Naive thymus-derived CD4-positive, alpha-beta T cell (primary cell): ENCODE measurements at regions of chr12 and their contacts with region 1.

Region 1: DNA sequence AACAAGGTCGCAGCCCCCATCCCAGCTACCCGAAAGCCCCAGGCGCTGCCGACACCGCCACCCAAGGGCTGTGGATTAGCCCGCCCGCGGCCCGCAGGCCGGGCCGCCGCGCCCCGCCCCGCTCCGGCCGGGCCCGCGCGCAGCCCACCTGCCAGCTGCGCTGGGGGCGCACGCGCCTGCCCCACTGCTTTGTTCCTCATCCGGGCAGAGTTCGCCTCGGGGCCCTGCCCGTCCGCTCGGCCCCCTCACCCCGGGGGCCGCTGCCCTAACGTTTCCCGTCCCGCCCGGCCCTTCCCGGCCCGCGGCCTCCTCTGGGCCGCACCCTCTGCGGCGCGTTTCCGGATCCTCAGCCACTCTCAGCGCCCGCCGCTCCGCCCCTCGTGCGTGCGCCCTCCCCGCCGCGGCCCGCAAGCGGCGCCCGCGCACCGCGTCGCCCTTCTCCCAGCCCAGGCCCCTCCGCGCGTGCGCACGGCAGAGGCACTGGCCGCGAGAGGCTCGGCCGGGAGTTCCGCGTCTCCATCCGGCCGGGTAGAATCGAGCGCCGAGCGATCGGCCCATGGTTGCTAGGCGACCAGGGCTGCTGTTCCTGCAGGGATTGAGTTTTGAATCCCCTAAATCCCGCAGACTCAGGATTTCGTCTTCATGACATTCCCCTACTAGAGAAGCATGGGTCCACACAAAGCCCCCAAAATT is at the start of gene PRDM4:
- DNase-seq: peak; percentile 85 to 96 (median 93)
- ATAC-seq: peak; percentile 99
- H3K4me3 ChIP-seq: peak within 1 kb of the TSS; percentile 83
- H3K4me3 Mint-ChIP-seq: peak within 1 kb of the TSS; percentile 85 to 94 (median 91)
- H3K27ac ChIP-seq: peak within 1 kb of the TSS; percentile 78
- H3K27ac Mint-ChIP-seq: peak within 1 kb of the TSS; percentile 85 to 96 (median 91)
- H3K4me1 ChIP-seq: peaks cover 21% of the 10 kb centered on the region in 2 donors
- H3K4me1 Mint-ChIP-seq: peaks cover 19 to 52% (median 35%) of the 10 kb centered on the region in 7 donors
- H3K27me3 ChIP-seq: no peaks in the 10 kb centered on the region
- H3K27me3 Mint-ChIP-seq: peaks cover 0 to 5% (median 0%) of the 10 kb centered on the region in 5 donors
- total RNA-seq, gene PRDM4: 32.4 to 41.3 (median 36.4) TPM

Region 2: GRCh38 chr12:106774005-106774807 is 986.7 kb before region 1 on chr12 and contains the start of gene RIC8B:
- CTCF ChIA-PET with region 1: no interaction called
- POLR2A ChIA-PET with region 1: no interaction called
- intact Hi-C with region 1: loop called (anchors 1 to 10 kb)
- DNase-seq: peak; percentile 63 to 84 (median 70)
- ATAC-seq: peak; percentile 91
- H3K4me3 ChIP-seq: peak within 1 kb of the TSS; percentile 84
- H3K4me3 Mint-ChIP-seq: peak within 1 kb of the TSS; percentile 92 to 100 (median 97)
- H3K27ac ChIP-seq: peak within 1 kb of the TSS; percentile 88
- H3K27ac Mint-ChIP-seq: peak within 1 kb of the TSS; percentile 94 to 99 (median 97)
- H3K4me1 ChIP-seq: peaks cover 0 to 19% of the 10 kb centered on the region in 2 donors
- H3K4me1 Mint-ChIP-seq: peaks cover 22 to 49% (median 39%) of the 10 kb centered on the region in 7 donors
- H3K27me3 ChIP-seq: no peaks in the 10 kb centered on the region
- H3K27me3 Mint-ChIP-seq: peaks cover 0 to 7% (median 0%) of the 10 kb centered on the region in 5 donors
- total RNA-seq, gene RIC8B: 9.8 to 21.1 (median 15.6) TPM

Region 3: GRCh38 chr12:107570721-107571120 is 190.2 kb before region 1 on chr12:
- CTCF ChIA-PET with region 1: no interaction called
- POLR2A ChIA-PET with region 1: no interaction called
- intact Hi-C with region 1: no loop called
- DNase-seq: no peak
- ATAC-seq: no peak
- H3K4me3 ChIP-seq: no peak overlapping the region
- H3K4me3 Mint-ChIP-seq: no peak overlapping the region
- H3K27ac ChIP-seq: no peak overlapping the region
- H3K27ac Mint-ChIP-seq: no peak overlapping the region
- H3K4me1 ChIP-seq: no peaks in the 10 kb centered on the region
- H3K4me1 Mint-ChIP-seq: peaks cover 8 to 18% (median 9%) of the 10 kb centered on the region in 7 donors
- H3K27me3 ChIP-seq: no peaks in the 10 kb centered on the region
- H3K27me3 Mint-ChIP-seq: no peaks in the 10 kb centered on the region

Region 4: DNA sequence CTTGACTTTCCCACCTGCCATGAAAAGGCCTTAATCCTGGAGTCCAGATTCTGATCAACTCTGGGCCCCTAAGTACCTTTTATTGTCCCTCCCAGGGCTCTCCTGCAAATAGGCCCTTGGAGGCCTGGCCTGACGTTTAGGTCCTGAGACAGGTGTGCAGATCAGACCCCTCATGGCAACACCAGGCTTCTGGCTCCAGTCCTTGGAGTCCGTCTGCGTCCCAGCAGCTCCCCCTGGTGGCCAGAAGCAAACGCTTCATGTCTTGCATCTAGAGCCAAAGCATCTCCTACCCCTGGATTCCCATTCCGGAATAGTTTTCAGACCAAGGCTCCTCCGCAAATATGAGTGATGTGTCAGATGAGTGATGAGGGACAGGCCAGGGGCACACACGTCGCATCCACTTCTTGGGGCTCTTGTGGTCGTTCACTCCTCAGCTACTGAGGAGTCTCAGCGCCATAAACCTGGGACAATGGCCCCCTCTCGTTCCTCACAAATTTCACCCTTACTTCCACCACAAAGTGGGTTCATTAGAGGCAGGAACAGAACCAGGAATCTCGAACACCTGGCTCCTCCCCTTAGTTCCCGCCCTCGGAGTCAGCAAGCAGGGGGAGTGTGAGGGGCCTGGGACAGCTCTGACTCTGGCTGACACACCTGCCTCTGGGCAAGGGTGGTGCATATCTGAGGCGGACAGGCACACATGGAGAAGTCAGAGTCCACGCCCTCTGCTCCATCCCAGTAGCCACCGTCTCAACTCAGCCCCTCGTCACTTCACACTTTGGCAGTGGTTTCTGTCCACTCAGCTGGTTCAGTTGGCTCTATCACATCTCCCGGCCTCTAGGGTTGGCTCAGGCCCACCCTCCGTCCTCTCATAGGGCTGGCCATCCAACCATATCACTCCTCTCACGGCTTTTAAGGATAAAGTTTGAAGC is 153.2 kb before region 1 on chr12:
- CTCF ChIA-PET with region 1: no interaction called
- POLR2A ChIA-PET with region 1: no interaction called
- intact Hi-C with region 1: no loop called
- DNase-seq: peak; percentile 55 to 82 (median 71)
- ATAC-seq: peak; percentile 78
- H3K4me3 ChIP-seq: no peak overlapping the region
- H3K4me3 Mint-ChIP-seq: no peak overlapping the region
- H3K27ac ChIP-seq: no peak overlapping the region
- H3K27ac Mint-ChIP-seq: peak overlapping the region in 2 of 9 donors; percentile 9 to 25
- H3K4me1 ChIP-seq: no peaks in the 10 kb centered on the region
- H3K4me1 Mint-ChIP-seq: no peaks in the 10 kb centered on the region
- H3K27me3 ChIP-seq: no peaks in the 10 kb centered on the region
- H3K27me3 Mint-ChIP-seq: no peaks in the 10 kb centered on the region

Region 5: GRCh38 chr12:107884769-107885694 is 124.1 kb after region 1 on chr12:
- CTCF ChIA-PET with region 1: interaction called, 3 read pairs
- POLR2A ChIA-PET with region 1: no interaction called
- intact Hi-C with region 1: loop called (anchors 1 to 5 kb)
- DNase-seq: peak in 5 of 9 donors; percentile 5 to 29 (median 13)
- ATAC-seq: peak; percentile 60
- H3K4me3 ChIP-seq: no peak overlapping the region
- H3K4me3 Mint-ChIP-seq: no peak overlapping the region
- H3K27ac ChIP-seq: no peak overlapping the region
- H3K27ac Mint-ChIP-seq: no peak overlapping the region
- H3K4me1 ChIP-seq: no peaks in the 10 kb centered on the region
- H3K4me1 Mint-ChIP-seq: no peaks in the 10 kb centered on the region
- H3K27me3 ChIP-seq: no peaks in the 10 kb centered on the region
- H3K27me3 Mint-ChIP-seq: peaks cover 7 to 21% (median 13%) of the 10 kb centered on the region in 5 donors

Region 6: DNA sequence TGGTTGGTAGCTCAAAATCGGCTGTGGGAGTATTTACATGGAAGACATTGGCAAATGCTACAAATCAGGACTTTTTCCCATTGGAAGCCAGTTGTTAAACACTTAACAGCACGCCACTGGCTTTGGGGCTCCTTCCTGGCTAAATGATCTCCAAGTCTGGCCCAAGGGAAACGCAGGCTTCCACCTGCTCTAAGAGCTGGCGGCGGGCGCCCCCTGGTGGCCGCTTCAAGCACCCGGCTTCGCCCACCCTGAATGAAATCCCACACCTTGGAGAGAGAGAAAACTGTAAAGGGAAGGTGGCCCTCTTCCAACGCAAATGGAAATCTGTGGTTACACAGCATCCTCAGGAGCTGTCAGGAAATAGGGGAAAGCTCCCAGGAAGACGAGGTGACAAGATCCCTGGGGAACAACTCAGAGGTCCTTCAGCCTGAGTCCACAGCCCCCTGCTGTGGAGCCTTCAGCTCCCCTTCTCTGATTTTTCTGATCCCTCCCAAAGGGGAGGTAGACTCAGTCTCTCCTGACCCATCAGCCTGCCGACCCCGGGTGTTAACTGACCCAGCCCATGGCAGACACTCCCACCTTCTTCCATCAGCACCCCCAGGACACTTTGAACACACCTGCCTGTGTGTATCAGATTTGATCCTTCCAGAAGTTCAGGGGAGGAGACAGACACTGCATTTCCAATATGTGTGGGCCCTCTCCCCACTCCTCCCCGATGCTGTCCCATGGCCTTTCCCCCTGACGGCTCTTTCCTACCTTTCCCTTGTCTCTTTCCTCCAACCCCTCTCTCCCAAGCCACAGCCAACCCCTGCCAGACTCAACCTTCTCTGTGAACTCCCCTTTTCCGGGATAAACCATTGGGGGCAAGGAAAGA is 857.4 kb after region 1 on chr12:
- CTCF ChIA-PET with region 1: no interaction called
- POLR2A ChIA-PET with region 1: no interaction called
- intact Hi-C with region 1: loop called (anchors 5 to 10 kb)
- DNase-seq: peak; percentile 61 to 81 (median 74)
- ATAC-seq: peak; percentile 72
- H3K4me3 ChIP-seq: no peak overlapping the region
- H3K4me3 Mint-ChIP-seq: peak overlapping the region in 8 of 10 donors; percentile 13 to 54 (median 34)
- H3K27ac ChIP-seq: peak overlapping the region; percentile 65
- H3K27ac Mint-ChIP-seq: peak overlapping the region; percentile 67 to 92 (median 79)
- H3K4me1 ChIP-seq: peaks cover 34 to 42% of the 10 kb centered on the region in 2 donors
- H3K4me1 Mint-ChIP-seq: peaks cover 44 to 72% (median 64%) of the 10 kb centered on the region in 7 donors
- H3K27me3 ChIP-seq: no peaks in the 10 kb centered on the region
- H3K27me3 Mint-ChIP-seq: no peaks in the 10 kb centered on the region

Region 7: GRCh38 chr12:109052414-109053323 is 1291.7 kb after region 1 on chr12 and contains the start of gene USP30:
- CTCF ChIA-PET with region 1: no interaction called
- POLR2A ChIA-PET with region 1: no interaction called
- intact Hi-C with region 1: loop called in 1 of 2 experiments (anchors 2 kb)
- DNase-seq: peak; percentile 68 to 86 (median 77)
- ATAC-seq: peak; percentile 93
- H3K4me3 ChIP-seq: peak within 1 kb of the TSS; percentile 91
- H3K4me3 Mint-ChIP-seq: peak within 1 kb of the TSS; percentile 86 to 99 (median 96)
- H3K27ac ChIP-seq: peak within 1 kb of the TSS; percentile 89
- H3K27ac Mint-ChIP-seq: peak within 1 kb of the TSS; percentile 89 to 98 (median 95)
- H3K4me1 ChIP-seq: peaks cover 13% of the 10 kb centered on the region in 2 donors
- H3K4me1 Mint-ChIP-seq: peaks cover 14 to 27% (median 17%) of the 10 kb centered on the region in 7 donors
- H3K27me3 ChIP-seq: no peaks in the 10 kb centered on the region
- H3K27me3 Mint-ChIP-seq: no peaks in the 10 kb centered on the region
- total RNA-seq, gene USP30: 7.8 to 15.7 (median 12.9) TPM